Activated CD4-positive, alpha-beta T cell treated with anti-CD3 and anti-CD28 coated beads, Interleukin-2, amount 10 ng/mL, durations not matched to agents 24 days and 14 days (primary cell): ENCODE measurements at regions of chr15 and their contacts with region 1.

Region 1: GRCh38 chr15:41827880-41828806 is at the start of gene JMJD7:
- DNase-seq: peak; percentile 98
- H3K4me3 Mint-ChIP-seq: peak within 1 kb of the TSS; percentile 86
- H3K27ac Mint-ChIP-seq: peak within 1 kb of the TSS; percentile 87
- H3K4me1 Mint-ChIP-seq: peaks cover 38% of the 10 kb centered on the region
- H3K27me3 Mint-ChIP-seq: peaks cover 2% of the 10 kb centered on the region
- total RNA-seq, gene JMJD7: 18.3 and 20.1 TPM in 2 replicates

Region 2: DNA sequence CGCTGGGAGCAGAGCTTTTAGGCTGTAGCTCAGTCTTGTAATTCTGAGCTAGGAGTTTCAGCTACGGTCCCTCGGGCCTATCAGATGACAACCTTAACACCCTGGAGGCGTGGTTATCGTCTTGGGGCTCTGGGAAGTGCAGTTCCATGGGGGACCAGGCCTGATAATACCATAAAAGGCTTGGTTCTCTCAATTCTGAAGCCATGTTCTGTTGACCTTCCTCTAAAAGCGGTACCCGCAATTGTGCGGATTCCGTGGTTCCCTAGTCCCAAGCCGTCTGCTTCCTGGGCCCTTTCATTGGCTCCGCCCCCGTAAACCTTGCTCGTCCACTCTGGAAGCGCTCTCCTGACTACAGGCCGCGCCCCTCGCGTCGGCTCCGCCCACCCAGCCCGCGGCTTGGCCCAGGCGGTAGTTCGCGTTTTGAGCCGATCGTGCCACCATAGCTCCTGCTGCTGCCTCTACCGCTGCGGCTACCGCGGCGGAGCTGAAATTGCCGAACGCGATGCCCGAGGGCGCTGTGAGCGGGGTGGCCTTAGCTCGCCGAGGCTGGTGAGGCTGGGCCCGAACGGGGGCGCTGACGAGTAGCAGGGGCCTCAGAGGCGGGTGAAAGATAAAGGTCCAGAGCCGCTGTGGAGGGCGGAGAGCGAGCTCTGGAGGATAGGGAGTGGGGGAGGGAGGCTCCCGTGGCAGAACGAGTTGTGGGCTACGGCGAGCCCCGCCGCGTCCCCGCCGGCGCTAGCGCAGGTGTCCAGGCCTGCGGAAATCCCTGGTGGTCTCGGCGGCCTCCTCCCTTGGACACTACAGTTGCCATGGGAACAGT is 53.9 kb before region 1 on chr15 and contains the start of gene MAPKBP1:
- intact Hi-C with region 1: loop called (anchors 1 kb)
- DNase-seq: peak; percentile 100
- H3K4me3 Mint-ChIP-seq: peak within 1 kb of the TSS; percentile 95
- H3K27ac Mint-ChIP-seq: peak within 1 kb of the TSS; percentile 94
- H3K4me1 Mint-ChIP-seq: peaks cover 49% of the 10 kb centered on the region
- H3K27me3 Mint-ChIP-seq: no peaks in the 10 kb centered on the region
- total RNA-seq, gene MAPKBP1: 24.8 and 27.1 TPM in 2 replicates